Right ventricle myocardium inferior (tissue), 1 donor: ENCODE measurements at regions of chr16 and their contacts with region 1.

Region 1: GRCh38 chr16:57938936-57939871 is 31.7 kb downstream of the CNGB1 start:
- DNase-seq: peak; percentile 89
- ATAC-seq: peak; percentile 88

Region 2: GRCh38 chr16:57984331-57985203 is 45.4 kb after region 1 on chr16:
- intact Hi-C with region 1: loop called (anchors 5 kb)
- DNase-seq: peak; percentile 94
- ATAC-seq: peak; percentile 87

Region 3: GRCh38 chr16:58047557-58048348 is 108.5 kb after region 1 on chr16:
- intact Hi-C with region 1: no loop called
- DNase-seq: no peak
- ATAC-seq: peak; percentile 18